ENCODE measurements at regions of chr1 and their contacts with region 1.

Region 1: DNA sequence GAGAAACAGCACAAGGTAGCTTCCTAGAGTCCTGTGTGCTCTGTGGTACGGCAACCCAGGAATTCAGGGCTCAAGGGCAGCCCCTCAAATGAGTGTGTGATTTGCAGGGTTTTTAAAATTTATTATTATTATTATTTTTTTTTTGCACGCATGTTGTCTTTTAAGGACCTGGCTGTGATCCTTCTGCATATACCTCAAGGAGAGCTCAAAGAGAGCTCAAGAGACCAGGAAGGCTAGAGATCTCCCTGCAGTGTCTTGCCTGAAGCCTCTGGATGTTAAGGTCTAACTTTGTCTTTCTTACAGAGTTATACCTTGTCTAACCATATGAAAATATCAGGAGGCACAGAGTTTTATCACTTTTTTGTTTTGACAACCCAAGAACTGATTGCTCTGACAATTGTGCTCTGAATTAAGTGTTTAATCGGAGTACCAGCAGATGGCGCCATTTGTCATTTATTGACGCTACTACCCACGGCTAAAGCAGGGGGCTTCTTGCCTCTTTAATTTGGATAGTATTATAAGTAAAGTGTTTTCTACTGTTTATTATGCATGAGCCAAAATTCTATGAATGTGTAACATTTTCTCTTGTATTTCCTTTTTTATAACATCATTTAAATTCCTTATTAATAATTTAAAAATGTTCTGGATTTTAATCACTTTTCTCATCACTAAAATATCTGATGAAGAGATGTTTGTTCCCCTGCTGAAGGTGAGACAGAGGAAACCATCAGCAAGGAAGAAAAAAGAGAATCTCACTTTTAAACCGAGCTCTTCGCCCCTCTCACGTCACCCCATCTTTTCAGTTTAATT is 35.8 kb upstream of the LMO4 start:
- DNase-seq: peak; percentile 85
- H3K4me3 Mint-ChIP-seq: no peak overlapping the region
- H3K27ac Mint-ChIP-seq: no peak overlapping the region
- H3K4me1 Mint-ChIP-seq: no peaks in the 10 kb centered on the region
- H3K27me3 Mint-ChIP-seq: peaks cover 4% of the 10 kb centered on the region

Region 2: GRCh38 chr1:87328272-87329050 is 35.6 kb after region 1 on chr1 and contains the start of gene LMO4:
- intact Hi-C with region 1: no loop called
- DNase-seq: peak; percentile 94
- H3K4me3 Mint-ChIP-seq: peak within 1 kb of the TSS; percentile 89
- H3K27ac Mint-ChIP-seq: peak within 1 kb of the TSS; percentile 94
- H3K4me1 Mint-ChIP-seq: peaks cover 35% of the 10 kb centered on the region
- H3K27me3 Mint-ChIP-seq: peaks cover 9% of the 10 kb centered on the region
- total RNA-seq, gene LMO4: 23.7 and 26.1 TPM in 2 replicates

Region 3: GRCh38 chr1:87953732-87954344 is 660.9 kb after region 1 on chr1:
- intact Hi-C with region 1: loop called (anchors 1 kb)
- DNase-seq: peak; percentile 83
- H3K4me3 Mint-ChIP-seq: no peak overlapping the region
- H3K27ac Mint-ChIP-seq: no peak overlapping the region
- H3K4me1 Mint-ChIP-seq: no peaks in the 10 kb centered on the region
- H3K27me3 Mint-ChIP-seq: peaks cover 6% of the 10 kb centered on the region

Region 4: DNA sequence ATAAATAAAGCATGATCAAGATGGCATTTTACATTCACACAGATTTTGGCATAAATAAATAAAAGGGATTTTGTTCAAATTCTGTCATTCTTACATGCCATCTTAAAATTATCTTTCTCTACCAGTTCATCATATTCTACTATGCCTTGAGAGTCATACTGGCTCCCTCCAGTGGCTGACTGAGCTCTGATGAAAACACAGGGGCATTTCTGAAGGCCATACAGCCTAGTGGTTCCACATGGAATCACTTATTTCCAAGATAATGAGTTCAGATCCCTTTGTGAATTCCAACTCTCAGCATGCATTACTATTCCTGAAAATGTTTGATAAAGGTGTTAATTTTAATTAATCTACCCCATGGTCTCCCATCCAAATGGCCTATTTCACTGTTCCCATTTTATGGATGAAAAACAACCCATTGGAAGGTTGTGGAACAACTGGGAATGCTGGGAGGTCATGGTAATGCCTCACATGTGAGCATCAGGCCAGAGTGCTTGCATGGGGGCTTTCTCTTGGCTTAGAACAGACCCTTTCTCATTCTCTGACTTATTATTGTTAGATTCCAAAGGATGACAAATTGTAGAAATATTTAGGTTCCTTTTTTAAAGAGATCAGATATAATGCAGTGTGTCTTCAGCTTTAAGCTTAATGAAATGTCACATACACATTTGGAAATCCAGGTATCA is 768.7 kb after region 1 on chr1:
- intact Hi-C with region 1: loop called (anchors 5 kb)
- DNase-seq: peak; percentile 63
- H3K4me3 Mint-ChIP-seq: no peak overlapping the region
- H3K27ac Mint-ChIP-seq: no peak overlapping the region
- H3K4me1 Mint-ChIP-seq: no peaks in the 10 kb centered on the region
- H3K27me3 Mint-ChIP-seq: no peaks in the 10 kb centered on the region

Measured in activated CD4-positive, alpha-beta T cell treated with anti-CD3 and anti-CD28 coated beads, Interleukin-2, amount 10 ng/mL, durations not matched to agents 24 days and 14 days (primary cell).